MCF 10A (cell line): ENCODE measurements at regions of chr15 and their contacts with region 1.

Region 1: GRCh38 chr15:99076552-99077308 is 28.1 kb upstream of the SYNM start:
- DNase-seq: peak; percentile 84
- H3K4me3 Mint-ChIP-seq: peak overlapping the region; percentile 60
- H3K27ac Mint-ChIP-seq: no peak overlapping the region
- H3K4me1 Mint-ChIP-seq: peaks cover 6% of the 10 kb centered on the region
- H3K27me3 Mint-ChIP-seq: peaks cover 13% of the 10 kb centered on the region
- CTCF ChIP-seq: peak; percentile 66

Region 2: DNA sequence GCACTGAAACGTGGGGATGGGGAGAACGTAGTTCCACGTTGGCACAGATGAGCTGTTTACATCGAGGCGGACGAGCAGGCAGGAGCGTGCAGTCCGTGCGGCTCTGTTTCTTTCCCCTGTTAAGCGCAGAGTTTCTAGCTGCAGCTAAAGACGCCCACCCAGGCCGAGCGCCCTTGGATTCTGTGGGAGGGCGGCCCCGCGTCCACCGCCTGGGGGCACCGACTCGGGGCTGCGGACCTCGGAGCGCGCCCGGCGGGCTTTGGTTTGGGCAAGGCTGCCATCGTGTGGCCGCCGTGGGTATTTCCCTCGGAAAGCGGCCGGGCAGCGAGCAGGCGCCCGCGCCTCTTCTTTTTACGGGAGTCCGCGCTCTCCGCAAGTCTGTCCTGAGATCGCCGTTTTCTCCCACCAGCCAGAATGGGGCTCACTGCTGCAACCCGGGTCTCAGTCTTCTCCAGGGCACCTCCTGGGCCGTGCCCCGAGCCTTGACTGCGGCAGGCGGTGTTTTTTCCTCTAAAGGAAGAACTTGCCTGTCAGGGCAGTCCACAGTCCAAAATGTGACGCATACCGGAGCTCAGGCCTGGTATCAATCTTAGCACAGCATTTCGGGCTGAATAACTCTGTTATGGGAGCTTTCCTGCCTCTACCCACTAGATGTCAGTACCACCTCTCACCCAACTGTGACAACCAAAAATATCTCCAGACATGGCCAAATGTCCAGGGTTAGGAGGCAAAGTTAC is 648.3 kb before region 1 on chr15:
- CTCF ChIA-PET with region 1: interaction called, 12 read pairs
- POLR2A ChIA-PET with region 1: no interaction called
- intact Hi-C with region 1: no loop called
- DNase-seq: peak; percentile 59
- H3K4me3 Mint-ChIP-seq: peak overlapping the region; percentile 69
- H3K27ac Mint-ChIP-seq: no peak overlapping the region
- H3K4me1 Mint-ChIP-seq: peaks cover 8% of the 10 kb centered on the region
- H3K27me3 Mint-ChIP-seq: peaks cover 15% of the 10 kb centered on the region
- CTCF ChIP-seq: peak; percentile 79

Region 3: GRCh38 chr15:98779463-98780071 is 297.2 kb before region 1 on chr15:
- CTCF ChIA-PET with region 1: no interaction called
- POLR2A ChIA-PET with region 1: no interaction called
- intact Hi-C with region 1: loop called (anchors 10 kb)
- DNase-seq: peak; percentile 69
- H3K4me3 Mint-ChIP-seq: peak overlapping the region; percentile 45
- H3K27ac Mint-ChIP-seq: no peak overlapping the region
- H3K4me1 Mint-ChIP-seq: no peaks in the 10 kb centered on the region
- H3K27me3 Mint-ChIP-seq: no peaks in the 10 kb centered on the region
- CTCF ChIP-seq: peak; percentile 58

Region 4: GRCh38 chr15:98914626-98915025 is 162.1 kb before region 1 on chr15:
- CTCF ChIA-PET with region 1: no interaction called
- POLR2A ChIA-PET with region 1: no interaction called
- intact Hi-C with region 1: loop called (anchors 5 kb)
- DNase-seq: peak; percentile 71
- H3K4me3 Mint-ChIP-seq: no peak overlapping the region
- H3K27ac Mint-ChIP-seq: no peak overlapping the region
- H3K4me1 Mint-ChIP-seq: peaks cover 8% of the 10 kb centered on the region
- H3K27me3 Mint-ChIP-seq: no peaks in the 10 kb centered on the region
- CTCF ChIP-seq: no peak

Region 5: GRCh38 chr15:99090011-99090699 is 13.4 kb after region 1 on chr15:
- CTCF ChIA-PET with region 1: interaction called, 24 read pairs
- POLR2A ChIA-PET with region 1: no interaction called
- intact Hi-C with region 1: no loop called
- DNase-seq: no peak
- H3K4me3 Mint-ChIP-seq: no peak overlapping the region
- H3K27ac Mint-ChIP-seq: no peak overlapping the region
- H3K4me1 Mint-ChIP-seq: no peaks in the 10 kb centered on the region
- H3K27me3 Mint-ChIP-seq: peaks cover 30% of the 10 kb centered on the region
- CTCF ChIP-seq: no peak

Region 6: DNA sequence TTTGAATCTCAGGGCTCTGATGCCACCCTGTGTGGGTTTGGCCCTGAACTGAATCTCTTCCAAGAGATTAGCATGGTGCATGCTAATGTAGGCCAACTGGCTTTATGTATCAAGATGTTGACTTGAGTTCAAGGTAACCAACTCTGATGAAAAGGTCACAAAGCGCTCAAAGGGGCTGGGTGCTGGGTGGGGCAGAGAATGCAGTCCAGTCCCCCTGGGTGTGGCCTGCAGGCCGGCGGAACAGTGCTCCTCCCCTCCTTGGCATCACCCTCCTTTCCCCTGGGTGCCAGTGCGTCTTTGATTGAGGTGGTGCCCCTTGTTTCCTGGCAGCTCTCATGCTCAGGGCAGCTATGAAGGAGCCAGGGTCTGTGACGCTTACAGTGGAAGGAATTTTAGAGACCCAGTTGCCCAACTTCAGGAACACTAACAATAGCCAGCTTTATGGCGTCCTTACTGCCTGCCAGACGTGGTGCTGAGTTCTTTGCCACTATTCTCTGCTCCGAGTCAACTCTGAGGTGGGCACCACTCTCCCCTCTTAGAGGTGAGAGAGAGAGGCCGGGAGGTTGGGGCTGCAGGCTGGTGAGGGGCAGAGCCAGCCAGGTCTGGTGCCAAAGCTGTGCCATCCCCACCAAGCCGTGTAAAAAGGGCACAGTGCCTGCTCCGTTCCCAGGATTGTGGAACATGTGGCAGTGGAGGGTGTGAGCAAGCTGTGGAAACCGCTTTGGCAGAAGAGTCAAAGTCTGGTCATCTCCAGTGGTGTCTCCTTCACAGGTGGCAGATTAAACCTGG is 38.0 kb after region 1 on chr15:
- CTCF ChIA-PET with region 1: no interaction called
- POLR2A ChIA-PET with region 1: no interaction called
- intact Hi-C with region 1: no loop called
- DNase-seq: no peak
- H3K4me3 Mint-ChIP-seq: no peak overlapping the region
- H3K27ac Mint-ChIP-seq: no peak overlapping the region
- H3K4me1 Mint-ChIP-seq: no peaks in the 10 kb centered on the region
- H3K27me3 Mint-ChIP-seq: no peaks in the 10 kb centered on the region
- CTCF ChIP-seq: no peak

Region 7: GRCh38 chr15:99213187-99213811 is 136.6 kb after region 1 on chr15:
- CTCF ChIA-PET with region 1: interaction called, 10 read pairs
- POLR2A ChIA-PET with region 1: no interaction called
- intact Hi-C with region 1: no loop called
- DNase-seq: peak; percentile 64
- H3K4me3 Mint-ChIP-seq: no peak overlapping the region
- H3K27ac Mint-ChIP-seq: no peak overlapping the region
- H3K4me1 Mint-ChIP-seq: peaks cover 6% of the 10 kb centered on the region
- H3K27me3 Mint-ChIP-seq: no peaks in the 10 kb centered on the region
- CTCF ChIP-seq: peak; percentile 85